ENCODE measurements at regions of chr4 and their contacts with region 1.

Region 1: GRCh38 chr4:140581078-140581477 is 12.3 kb upstream of the UCP1 start:
- DNase-seq: no peak
- H3K4me3 ChIP-seq: no peak overlapping the region
- CTCF ChIP-seq: no peak

Region 2: GRCh38 chr4:140641789-140642439 is 60.8 kb after region 1 on chr4:
- in situ Hi-C with region 1: loop called (anchors 5 kb)
- DNase-seq: no peak
- H3K4me3 ChIP-seq: no peak overlapping the region
- CTCF ChIP-seq: no peak

Measured in astrocyte of the cerebellum (primary cell).